ENCODE measurements at regions of chr13 and their contacts with region 1.

Region 1: GRCh38 chr13:28658796-28659620 is at the start of gene POMP:
- DNase-seq: peak; percentile 96
- H3K4me3 Mint-ChIP-seq: peak within 1 kb of the TSS; percentile 94
- H3K27ac Mint-ChIP-seq: peak within 1 kb of the TSS; percentile 98
- H3K4me1 Mint-ChIP-seq: peaks cover 51% of the 10 kb centered on the region
- H3K27me3 Mint-ChIP-seq: no peaks in the 10 kb centered on the region
- total RNA-seq, gene POMP: 123 to 125 TPM

Region 2: DNA sequence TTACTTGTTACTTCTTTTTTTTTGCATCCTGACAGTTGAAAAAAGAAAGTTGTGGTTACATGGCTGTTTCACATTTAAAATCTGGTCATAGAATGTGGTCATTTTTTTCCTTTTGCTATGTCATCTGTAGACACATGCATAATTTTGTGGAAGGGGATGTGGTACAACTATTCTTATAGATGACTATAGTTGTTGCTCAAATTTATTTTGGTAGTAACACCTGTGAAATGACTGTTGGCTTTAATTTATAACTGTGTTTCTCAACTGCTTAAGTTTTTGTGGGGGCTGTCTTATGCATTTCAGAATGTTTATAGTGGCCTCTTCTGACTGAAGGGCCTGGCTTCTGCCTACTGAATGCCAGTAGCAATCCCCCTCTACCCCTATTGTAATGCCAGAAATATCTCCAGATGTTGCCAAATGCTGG is 390.2 kb before region 1 on chr13:
- CTCF ChIA-PET with region 1: no interaction called
- POLR2A ChIA-PET with region 1: no interaction called
- intact Hi-C with region 1: loop called (anchors 1 kb)
- DNase-seq: no peak
- H3K4me3 Mint-ChIP-seq: no peak overlapping the region
- H3K27ac Mint-ChIP-seq: peak overlapping the region; percentile 13
- H3K4me1 Mint-ChIP-seq: peaks cover 10% of the 10 kb centered on the region
- H3K27me3 Mint-ChIP-seq: no peaks in the 10 kb centered on the region

Region 3: DNA sequence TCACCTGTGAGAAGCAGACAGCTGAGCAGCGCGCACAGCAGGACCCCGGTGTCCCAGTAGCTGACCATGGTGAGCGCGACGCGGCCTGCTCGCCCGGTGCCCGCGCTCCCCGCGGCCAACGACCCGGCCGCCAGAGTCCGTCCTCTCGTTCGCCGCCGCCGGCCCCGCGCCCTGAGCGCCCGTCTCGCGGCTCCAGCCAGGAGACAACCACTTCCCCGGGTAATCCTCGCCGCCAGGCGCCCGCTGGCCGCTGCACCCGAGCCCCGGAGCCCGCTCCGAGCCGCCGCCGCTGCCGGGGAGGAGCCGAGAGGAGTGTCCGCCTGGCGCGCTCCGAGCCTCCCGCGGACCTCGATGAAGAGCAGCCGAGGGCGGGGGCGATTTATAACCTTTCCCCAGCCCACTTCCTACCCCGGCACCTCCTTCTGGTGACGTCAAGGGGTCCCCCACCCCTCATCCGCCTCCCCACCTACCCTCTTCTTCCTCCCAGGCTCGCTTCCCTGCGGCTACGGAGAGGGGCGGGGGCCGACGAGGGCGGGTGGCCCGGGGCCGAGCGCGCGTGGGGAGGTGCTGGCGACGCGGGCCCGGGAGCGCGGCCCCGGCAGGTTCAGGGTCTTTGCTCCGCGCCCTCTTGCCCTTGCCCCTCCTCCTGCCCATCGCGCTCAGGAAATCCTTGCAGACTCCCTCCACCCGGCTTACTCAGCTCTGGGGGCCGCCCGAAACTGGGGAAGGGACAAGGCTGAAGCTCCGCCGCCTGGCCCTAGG is 164.1 kb before region 1 on chr13 and contains the start of gene FLT1:
- CTCF ChIA-PET with region 1: no interaction called
- POLR2A ChIA-PET with region 1: no interaction called
- intact Hi-C with region 1: loop called (anchors 1 kb)
- DNase-seq: peak; percentile 39
- H3K4me3 Mint-ChIP-seq: peak within 1 kb of the TSS; percentile 70
- H3K27ac Mint-ChIP-seq: no peak within 1 kb of the TSS
- H3K4me1 Mint-ChIP-seq: peaks cover 10% of the 10 kb centered on the region
- H3K27me3 Mint-ChIP-seq: peaks cover 47% of the 10 kb centered on the region
- total RNA-seq, gene FLT1: 17.2 to 19.5 TPM

Region 4: DNA sequence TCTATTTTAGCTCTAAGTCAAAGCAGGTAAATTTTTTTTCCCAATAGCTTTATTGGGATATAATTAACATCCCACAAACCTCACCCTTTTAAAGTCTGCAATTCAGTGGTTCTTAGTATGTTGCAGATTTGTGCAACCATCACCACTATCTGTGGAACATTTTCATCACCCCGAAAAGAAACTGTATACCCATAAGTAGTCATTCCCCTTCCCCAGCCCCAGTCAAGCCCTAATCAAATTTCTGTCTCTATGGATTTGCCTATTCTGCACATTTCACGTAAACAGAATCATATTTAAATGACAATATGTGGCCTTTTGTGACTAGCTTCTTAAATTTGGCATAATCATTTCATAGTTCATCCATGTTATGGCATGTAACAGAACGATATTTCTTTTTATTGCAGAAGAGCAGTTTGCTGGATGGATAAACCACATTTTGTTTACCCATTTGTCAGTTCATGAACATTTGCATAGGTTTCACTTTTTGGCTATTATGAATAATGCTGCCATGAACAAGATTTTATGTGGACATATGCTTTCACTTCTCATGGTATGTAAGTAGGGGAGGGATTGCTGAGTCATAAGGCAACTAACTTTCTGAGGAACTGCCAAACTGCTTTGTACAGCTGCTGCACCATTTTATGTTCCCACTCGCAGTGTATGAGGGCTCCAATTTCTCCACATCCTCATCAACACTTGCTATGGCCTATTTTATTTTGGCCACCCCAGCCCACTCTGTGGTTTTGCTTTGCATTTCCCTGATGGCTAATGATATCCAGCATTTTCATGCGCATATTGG is 48.8 kb after region 1 on chr13:
- CTCF ChIA-PET with region 1: no interaction called
- POLR2A ChIA-PET with region 1: interaction called, 3 read pairs
- intact Hi-C with region 1: loop called (anchors 2 kb)
- DNase-seq: peak; percentile 20
- H3K4me3 Mint-ChIP-seq: no peak overlapping the region
- H3K27ac Mint-ChIP-seq: peak overlapping the region; percentile 33
- H3K4me1 Mint-ChIP-seq: peaks cover 9% of the 10 kb centered on the region
- H3K27me3 Mint-ChIP-seq: no peaks in the 10 kb centered on the region

Region 5: GRCh38 chr13:29125191-29125933 is 466.4 kb after region 1 on chr13:
- CTCF ChIA-PET with region 1: no interaction called
- POLR2A ChIA-PET with region 1: no interaction called
- intact Hi-C with region 1: loop called (anchors 5 kb)
- DNase-seq: no peak
- H3K4me3 Mint-ChIP-seq: peak overlapping the region; percentile 21
- H3K27ac Mint-ChIP-seq: peak overlapping the region; percentile 80
- H3K4me1 Mint-ChIP-seq: peaks cover 19% of the 10 kb centered on the region
- H3K27me3 Mint-ChIP-seq: no peaks in the 10 kb centered on the region